ENCODE measurements at regions of chr3 and their contacts with region 1.

Region 1: DNA sequence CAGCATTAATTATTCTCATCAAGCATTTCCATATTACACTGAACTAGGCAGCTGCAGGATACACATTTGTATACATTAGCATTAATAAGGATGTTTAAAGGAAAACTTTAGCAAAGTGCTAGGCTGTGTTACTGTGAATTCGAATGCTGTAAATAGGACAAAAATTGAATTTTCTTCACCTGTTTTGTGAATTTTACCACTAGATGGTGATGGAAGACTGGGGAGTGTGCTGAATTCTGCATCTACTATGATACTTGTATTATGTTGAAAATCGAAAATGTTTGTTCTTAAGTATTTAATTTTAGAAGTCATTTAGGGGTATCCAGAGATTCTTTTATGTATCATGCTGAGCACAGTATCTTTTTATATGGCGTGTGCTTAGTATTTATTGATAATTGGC is 12.3 kb upstream of the P2RY14 start:
- DNase-seq: no peak
- H3K4me3 Mint-ChIP-seq: no peak overlapping the region
- H3K27ac Mint-ChIP-seq: no peak overlapping the region
- H3K4me1 Mint-ChIP-seq: peaks cover 3% of the 10 kb centered on the region
- H3K27me3 Mint-ChIP-seq: peaks cover 14% of the 10 kb centered on the region

Region 2: DNA sequence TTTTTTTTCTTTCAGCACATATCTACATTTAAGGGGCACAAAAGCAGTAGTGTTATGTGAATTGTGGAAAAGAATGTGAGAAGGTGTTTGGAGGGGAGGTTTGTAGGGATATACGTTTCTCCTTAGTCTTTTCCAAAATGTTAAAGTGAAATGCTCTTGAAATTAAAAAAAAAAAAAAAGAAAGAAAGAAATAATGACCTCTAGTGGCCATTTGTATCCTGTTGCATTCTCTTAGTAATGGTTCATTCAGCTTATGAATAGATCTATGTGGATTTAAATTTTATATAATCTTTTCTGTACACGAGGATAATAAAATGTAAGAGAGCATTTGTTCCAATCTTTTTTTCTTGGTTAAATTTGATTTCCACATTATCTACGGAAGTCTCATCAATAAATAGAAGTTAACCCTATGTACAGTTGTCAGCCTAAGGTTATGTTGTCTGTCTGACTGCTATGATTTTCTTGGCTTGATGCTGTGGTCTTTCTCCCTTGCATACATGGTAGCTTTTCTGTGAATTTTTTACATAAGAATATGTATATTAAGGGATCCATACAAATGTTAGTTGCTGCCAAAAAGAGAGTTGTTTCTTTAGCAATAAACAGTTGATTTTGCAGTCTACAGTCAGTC is 37.0 kb after region 1 on chr3:
- intact Hi-C with region 1: loop called (anchors 1 kb)
- DNase-seq: no peak
- H3K4me3 Mint-ChIP-seq: no peak overlapping the region
- H3K27ac Mint-ChIP-seq: no peak overlapping the region
- H3K4me1 Mint-ChIP-seq: peaks cover 8% of the 10 kb centered on the region
- H3K27me3 Mint-ChIP-seq: peaks cover 12% of the 10 kb centered on the region

Region 3: DNA sequence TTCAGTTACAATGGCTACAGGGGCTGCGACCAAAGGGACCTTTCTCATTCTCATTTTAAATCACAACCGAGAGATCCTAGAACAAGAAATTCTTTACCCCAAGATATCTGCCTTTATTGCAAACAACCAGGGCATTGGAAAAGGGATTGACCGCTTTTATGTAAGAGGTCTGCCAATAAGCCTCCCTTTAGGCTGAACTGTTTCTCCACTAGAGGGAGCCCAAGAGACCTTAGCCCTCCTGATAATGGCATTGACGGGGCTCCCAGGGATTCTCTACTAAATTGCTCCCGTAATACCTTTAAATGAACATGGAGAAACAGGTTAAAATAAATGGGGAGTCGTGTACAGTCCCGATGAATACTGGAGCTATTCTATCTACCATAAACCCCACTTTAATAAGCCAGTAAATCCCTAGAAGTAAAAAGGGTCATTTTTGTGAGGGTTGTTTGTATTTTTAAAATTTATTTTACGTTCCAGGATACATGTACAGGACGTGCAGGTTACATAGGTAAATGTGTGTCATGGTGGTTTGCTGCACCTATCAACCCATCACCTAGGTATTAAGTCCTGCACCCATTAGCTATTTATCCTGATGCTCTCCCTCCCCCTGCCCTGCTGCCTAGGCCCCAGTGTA is 177.7 kb after region 1 on chr3:
- intact Hi-C with region 1: loop called (anchors 2 kb)
- DNase-seq: peak; percentile 6
- H3K4me3 Mint-ChIP-seq: no peak overlapping the region
- H3K27ac Mint-ChIP-seq: no peak overlapping the region
- H3K4me1 Mint-ChIP-seq: no peaks in the 10 kb centered on the region
- H3K27me3 Mint-ChIP-seq: peaks cover 9% of the 10 kb centered on the region

Measured in activated T-helper 1 cell treated with anti-CD3 and anti-CD28 coated beads, Interleukin-12 subunit alpha, Interleukin-12 subunit beta, Interleukin-2, Interleukin-4 antibody, amounts not matched to agents 30 ng/mL and 10 ng/mL and 1 ng/mL, durations not matched to agents 14 hours and 24 hours and 36 hours (primary cell).